ENCODE measurements at regions of chr4 and their contacts with region 1.

Region 1: DNA sequence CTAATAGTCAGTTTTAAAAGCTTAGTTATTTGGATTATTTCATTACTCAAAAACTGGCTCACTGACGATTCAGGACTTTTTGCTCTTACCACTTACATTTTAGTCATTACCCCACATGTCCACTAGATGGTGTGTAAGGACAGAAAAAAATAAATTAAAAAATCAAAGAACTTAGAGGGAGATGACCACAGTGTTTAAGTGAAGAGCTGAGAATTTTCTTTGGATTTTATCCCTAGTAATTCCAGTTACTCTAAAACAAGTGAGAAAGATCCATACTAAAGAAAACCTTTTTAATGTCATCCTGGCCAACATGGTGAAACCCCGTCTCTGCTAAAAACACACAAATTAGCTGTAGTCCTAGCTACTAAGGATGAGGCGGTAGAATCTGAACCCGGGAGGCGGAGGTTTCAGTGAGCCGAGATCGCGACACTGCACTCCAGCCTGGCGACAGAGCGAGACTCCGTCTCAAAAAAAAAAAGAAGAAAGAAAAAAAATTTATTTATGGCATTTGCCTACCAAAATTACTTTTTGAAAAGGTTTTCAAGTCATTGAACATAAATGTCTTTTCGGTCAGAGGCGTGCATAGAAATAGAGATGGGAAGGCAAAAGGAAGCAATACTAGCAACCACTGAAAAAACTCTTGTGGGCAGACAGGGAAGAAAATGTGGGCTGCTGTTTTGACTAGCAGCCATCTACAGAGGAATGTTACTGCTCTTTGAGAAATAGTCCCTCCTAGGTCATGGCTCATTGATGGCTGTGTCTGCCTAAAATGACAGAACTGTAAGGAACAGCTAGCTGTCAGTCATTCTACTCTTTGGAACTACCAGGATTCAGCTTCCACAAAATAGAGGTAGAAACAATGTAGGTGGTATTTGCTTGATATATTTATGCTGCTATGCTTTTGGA is 26.6 kb upstream of the TMPRSS11B start:
- DNase-seq: peak; percentile 21
- ATAC-seq: peak; percentile 68
- H3K4me3 ChIP-seq: no peak overlapping the region
- H3K27ac ChIP-seq: no peak overlapping the region
- H3K4me1 ChIP-seq: no peaks in the 10 kb centered on the region
- H3K27me3 ChIP-seq: no peaks in the 10 kb centered on the region
- CTCF ChIP-seq: peak; percentile 60 to 67 (median 64); a peak in 5 of 6 replicates
- POLR2A ChIP-seq: no peak
- RAD21 ChIP-seq: peak; percentile 68

Region 2: GRCh38 chr4:68375667-68376559 is 103.8 kb after region 1 on chr4:
- CTCF ChIA-PET with region 1: interaction called, 24 read pairs
- POLR2A ChIA-PET with region 1: interaction called, 3 read pairs
- RAD21 ChIA-PET with region 1: interaction called, 4 to 6 read pairs
- intact Hi-C with region 1: loop called (anchors 2 kb)
- DNase-seq: peak; percentile 81
- ATAC-seq: peak; percentile 96
- H3K4me3 ChIP-seq: peak overlapping the region; percentile 35 to 59
- H3K27ac ChIP-seq: no peak overlapping the region
- H3K4me1 ChIP-seq: peaks cover 0 to 5% of the 10 kb centered on the region in 2 experiments; a peak in 1 of 4 replicates
- H3K27me3 ChIP-seq: no peaks in the 10 kb centered on the region
- CTCF ChIP-seq: peak; percentile 83 to 98 (median 88)
- POLR2A ChIP-seq: no peak
- RAD21 ChIP-seq: peak; percentile 84

Region 3: GRCh38 chr4:68476191-68476590 is 204.1 kb after region 1 on chr4:
- CTCF ChIA-PET with region 1: no interaction called
- POLR2A ChIA-PET with region 1: no interaction called
- RAD21 ChIA-PET with region 1: no interaction called
- intact Hi-C with region 1: loop called (anchors 10 kb)
- DNase-seq: no peak
- ATAC-seq: no peak
- H3K4me3 ChIP-seq: no peak overlapping the region
- H3K27ac ChIP-seq: no peak overlapping the region
- H3K4me1 ChIP-seq: no peaks in the 10 kb centered on the region
- H3K27me3 ChIP-seq: no peaks in the 10 kb centered on the region
- CTCF ChIP-seq: no peak
- POLR2A ChIP-seq: no peak
- RAD21 ChIP-seq: no peak

Region 4: DNA sequence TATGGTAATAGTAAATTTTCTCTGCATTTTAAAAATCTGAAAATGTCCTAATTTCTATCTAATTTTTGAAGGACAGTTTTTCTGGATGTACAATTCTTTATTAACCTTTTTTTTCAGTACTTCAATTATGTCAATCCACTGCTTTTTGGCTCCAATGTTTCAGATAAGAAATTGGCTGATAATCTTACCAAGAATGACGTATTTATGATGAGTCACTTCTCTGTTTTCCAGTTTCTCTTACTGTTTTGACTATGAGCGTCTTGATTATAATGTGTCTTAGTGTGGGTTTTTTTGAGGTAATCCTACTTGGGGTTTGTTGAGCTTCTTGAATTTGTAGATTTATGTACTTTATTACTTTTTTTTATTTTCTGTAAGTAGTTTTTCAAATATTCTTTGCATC is 895.2 kb after region 1 on chr4:
- CTCF ChIA-PET with region 1: no interaction called
- POLR2A ChIA-PET with region 1: no interaction called
- RAD21 ChIA-PET with region 1: no interaction called
- intact Hi-C with region 1: loop called (anchors 5 kb)
- DNase-seq: no peak
- ATAC-seq: no peak
- H3K4me3 ChIP-seq: no peak overlapping the region
- H3K27ac ChIP-seq: no peak overlapping the region
- H3K4me1 ChIP-seq: no peaks in the 10 kb centered on the region
- H3K27me3 ChIP-seq: no peaks in the 10 kb centered on the region
- CTCF ChIP-seq: no peak
- POLR2A ChIP-seq: no peak
- RAD21 ChIP-seq: no peak

Region 5: DNA sequence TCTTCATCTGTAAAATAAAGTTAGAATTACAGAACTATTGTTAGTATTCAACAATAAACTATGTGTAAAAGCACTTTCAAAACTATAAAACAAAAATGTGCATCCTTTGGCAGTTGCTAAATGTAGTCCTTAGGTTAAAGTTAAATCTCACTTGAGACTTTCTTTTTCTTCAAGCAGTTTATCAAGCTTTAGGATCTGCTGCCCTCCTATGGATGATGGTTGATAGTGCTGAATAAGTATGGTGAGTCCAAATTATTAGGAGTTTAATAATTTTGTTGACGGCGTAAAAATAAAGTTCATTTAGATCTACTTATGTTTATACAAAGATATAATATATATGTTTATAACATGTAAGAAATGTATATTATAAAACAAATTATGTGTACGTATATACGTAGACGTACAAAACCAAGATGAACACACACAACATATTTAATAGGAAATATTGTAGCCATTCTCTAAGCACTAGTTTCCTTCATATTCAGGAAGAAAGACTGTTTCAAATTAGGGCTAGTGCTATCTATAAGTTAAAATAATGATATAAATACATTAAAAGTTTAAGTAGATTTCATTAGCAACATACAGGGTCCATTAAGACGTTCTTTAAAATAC is 1345.1 kb after region 1 on chr4:
- CTCF ChIA-PET with region 1: no interaction called
- POLR2A ChIA-PET with region 1: no interaction called
- RAD21 ChIA-PET with region 1: no interaction called
- intact Hi-C with region 1: loop called (anchors 5 kb)
- DNase-seq: peak; percentile 47
- ATAC-seq: no peak; the same call in 1 of the 2 replicates
- H3K4me3 ChIP-seq: no peak overlapping the region
- H3K27ac ChIP-seq: no peak overlapping the region
- H3K4me1 ChIP-seq: no peaks in the 10 kb centered on the region
- H3K27me3 ChIP-seq: no peaks in the 10 kb centered on the region
- CTCF ChIP-seq: peak; percentile 49 to 63 (median 56); a peak in 5 of 6 replicates
- POLR2A ChIP-seq: no peak
- RAD21 ChIP-seq: peak; percentile 79